Cardiac septum (tissue), 1 donor: ENCODE measurements at regions of chr6 and their contacts with region 1.

Region 1: DNA sequence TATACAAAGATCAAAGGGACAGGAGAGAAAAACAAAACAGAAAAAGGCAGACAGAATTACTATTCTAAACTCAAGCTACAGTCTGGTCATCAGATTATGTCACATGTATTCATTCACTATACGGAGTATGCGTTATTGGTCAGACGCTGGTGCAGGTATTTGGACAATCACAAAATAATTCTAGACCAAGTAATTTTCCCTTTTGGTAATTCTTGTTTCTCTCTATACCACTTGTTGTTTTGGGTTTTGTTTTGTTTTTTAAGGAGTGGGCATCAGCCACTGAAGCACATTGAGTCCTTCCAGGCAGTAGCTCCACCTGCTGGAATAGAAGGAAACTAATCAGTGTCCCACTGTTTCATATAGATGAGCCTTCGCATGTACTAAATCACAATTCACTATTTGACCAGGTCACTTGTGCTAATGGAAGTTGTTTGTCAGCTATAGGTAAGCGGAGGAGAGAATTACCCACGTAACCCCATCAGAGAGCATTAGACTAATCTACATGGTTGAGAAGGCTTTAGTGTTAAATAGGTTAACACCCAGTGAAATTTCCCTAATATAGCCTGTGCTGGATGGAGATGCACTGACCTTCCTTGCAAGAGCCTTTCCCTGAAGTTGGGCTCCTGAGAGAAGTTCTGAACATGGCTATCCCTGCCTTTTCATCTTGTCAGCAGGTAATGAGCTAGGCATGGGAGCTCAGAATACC is 77.9 kb downstream of the TNFAIP3 start:
- DNase-seq: no peak

Region 2: DNA sequence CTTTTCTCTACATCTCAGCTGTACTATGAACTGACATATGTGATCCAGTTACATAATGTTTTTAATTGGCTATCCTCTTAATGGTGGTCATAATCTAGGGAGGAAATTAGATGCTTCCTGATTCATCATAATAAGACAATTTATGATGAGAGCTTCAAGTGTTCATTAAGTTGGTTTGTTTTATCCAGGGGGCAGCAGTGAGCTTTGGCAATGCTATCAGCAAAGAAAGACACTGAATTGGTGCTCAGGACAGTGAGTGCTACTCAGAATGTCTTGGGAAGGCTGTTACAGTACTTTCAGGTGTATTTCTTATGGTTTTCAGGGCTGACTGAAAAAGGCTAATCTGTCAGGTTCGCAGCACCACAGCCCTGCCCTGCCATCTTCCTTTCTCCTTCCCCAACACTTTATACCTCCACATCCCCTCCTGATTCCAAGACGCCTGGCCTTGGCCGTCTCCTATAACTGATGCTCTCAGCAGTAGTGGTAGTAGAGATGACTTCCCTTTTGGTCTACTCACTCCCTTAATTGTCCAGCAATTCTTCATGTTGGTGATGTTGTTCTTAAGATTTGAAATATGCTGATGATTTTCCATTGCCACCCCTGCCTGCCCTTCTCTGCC is 144.9 kb before region 1 on chr6:
- intact Hi-C with region 1: loop called (anchors 10 kb)
- DNase-seq: no peak

Region 3: DNA sequence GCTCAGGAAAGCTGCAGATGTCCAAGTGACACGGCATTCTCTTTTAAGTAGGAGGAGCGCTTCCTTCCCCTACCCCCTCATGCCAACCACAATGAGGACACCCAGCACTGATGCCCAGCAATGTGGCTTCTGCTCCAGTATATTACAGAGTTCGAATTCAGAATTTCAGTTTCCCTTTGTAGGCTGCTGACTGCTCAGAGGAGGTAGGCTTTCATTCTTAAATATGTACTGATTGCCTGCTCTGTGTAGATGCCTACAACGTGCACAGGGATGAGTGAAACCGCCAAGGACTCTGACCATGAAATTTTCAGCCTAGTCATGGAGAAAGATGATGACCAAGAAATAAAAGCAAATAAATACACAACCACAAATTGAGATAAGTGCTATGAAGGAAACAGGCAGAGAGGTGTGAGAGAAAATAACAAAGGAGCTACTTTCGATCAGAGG is 128.8 kb before region 1 on chr6:
- intact Hi-C with region 1: no loop called
- DNase-seq: no peak

Region 4: GRCh38 chr6:137866914-137867684 is 77.8 kb before region 1 on chr6 and contains the start of gene TNFAIP3:
- intact Hi-C with region 1: loop called (anchors 1 kb)
- DNase-seq: peak; percentile 98
- total RNA-seq, gene TNFAIP3: 7.9 TPM

Region 5: DNA sequence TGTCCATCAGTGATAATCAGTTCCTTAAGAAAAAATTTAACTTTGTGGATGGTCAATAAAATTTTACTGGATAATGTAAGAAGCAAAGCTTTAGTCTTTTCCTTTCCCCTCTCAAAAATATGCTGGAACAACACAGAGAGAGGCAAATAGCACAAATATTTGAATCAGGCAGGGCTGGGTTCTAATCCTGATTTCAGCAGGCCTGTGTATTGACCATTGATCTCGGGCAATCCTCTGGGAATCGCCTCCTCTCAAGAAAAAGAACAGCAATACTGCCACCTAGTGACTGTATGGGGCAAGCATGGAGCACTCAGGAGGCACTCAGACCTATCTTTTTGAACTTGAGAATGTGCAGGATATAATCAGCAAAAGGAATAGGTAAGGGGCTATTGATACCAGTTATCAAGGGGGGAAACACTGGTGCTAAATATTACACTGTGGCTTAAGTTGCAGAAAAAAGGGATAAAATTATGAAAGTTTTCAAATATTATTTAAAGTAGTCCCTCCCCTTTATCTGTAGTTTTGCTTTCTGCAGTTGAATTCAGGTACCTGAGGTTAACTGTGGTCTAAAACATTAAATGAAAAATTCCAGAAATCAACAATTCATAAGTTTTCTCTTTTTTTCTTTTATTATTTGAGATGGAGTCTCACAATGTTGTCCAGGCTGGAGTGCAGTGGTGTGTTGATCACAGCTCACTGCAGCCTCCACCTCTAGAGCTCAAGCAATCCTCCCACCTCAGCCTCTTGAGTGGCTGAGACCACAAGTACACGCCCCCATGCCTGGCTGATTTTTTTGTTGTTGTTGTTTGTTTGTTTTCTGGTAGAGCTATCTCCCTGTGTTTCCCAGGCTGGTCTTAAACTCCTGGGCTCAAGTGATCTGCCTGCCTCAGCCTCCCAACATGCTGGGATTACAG is 646.1 kb after region 1 on chr6:
- intact Hi-C with region 1: no loop called
- DNase-seq: no peak